ENCODE measurements at regions of chr20 and their contacts with region 1.

Region 1: GRCh38 chr20:58447511-58448391 is 58.7 kb downstream of the VAPB start:
- DNase-seq: peak; percentile 48 to 62
- ATAC-seq: peak; percentile 93 to 94
- H3K4me3 ChIP-seq: no peak overlapping the region
- H3K27ac ChIP-seq: no peak overlapping the region
- H3K4me1 ChIP-seq: no peaks in the 10 kb centered on the region
- CTCF ChIP-seq: peak; percentile 74
- EP300 ChIP-seq: no peak
- POLR2A ChIP-seq: no peak
- RAD21 ChIP-seq: peak; percentile 83 to 88

Region 2: DNA sequence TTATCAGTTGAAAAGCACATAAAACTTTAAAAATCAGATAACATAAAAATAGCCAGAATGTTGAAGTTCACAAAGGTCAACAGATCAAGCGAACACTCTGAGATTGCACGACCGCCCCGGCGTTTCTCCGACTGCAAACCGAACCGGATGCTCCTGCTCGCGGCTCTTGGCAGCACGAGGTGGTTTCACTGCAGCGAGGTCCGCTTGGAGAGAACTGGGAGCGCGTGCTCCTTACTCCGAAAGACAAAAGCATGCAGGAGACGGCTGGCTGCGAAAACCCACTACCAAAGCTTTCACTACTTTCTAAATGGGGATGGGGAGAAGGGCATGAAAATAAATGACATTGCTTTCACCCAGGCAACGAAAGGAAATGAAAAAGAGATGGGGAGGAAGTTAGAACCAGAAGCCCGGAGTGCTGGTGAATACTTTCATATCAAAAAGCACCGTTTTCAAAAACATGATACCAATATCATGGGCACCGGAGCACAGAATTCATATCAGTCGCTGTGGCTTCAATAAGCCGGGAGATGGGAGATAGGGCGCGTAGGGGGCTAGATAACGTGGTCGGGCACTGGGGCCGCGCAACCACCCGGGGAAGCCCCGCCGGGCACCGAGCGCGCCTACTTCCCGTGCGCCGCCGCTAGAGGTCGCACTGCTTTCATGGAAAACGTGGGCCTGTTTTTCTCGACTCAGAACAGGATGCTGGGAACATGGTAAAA is 211.0 kb before region 1 on chr20:
- CTCF ChIA-PET with region 1: interaction called, 42 read pairs
- POLR2A ChIA-PET with region 1: no interaction called
- DNase-seq: peak; percentile 67 to 84
- ATAC-seq: peak; percentile 94 to 95
- H3K4me3 ChIP-seq: peak overlapping the region; percentile 53
- H3K27ac ChIP-seq: peak overlapping the region; percentile 52 to 74; a peak in 5 of 6 replicates
- H3K4me1 ChIP-seq: peaks cover 4% of the 10 kb centered on the region; the same call in 1 of the 3 replicates
- CTCF ChIP-seq: peak; percentile 93
- EP300 ChIP-seq: no peak
- POLR2A ChIP-seq: no peak
- RAD21 ChIP-seq: peak; percentile 89 to 93

Region 3: GRCh38 chr20:58306421-58307276 is 141.1 kb before region 1 on chr20:
- CTCF ChIA-PET with region 1: interaction called, 14 read pairs
- POLR2A ChIA-PET with region 1: no interaction called
- DNase-seq: peak; percentile 10 to 30
- ATAC-seq: no peak
- H3K4me3 ChIP-seq: no peak overlapping the region
- H3K27ac ChIP-seq: no peak overlapping the region
- H3K4me1 ChIP-seq: peaks cover 16% of the 10 kb centered on the region
- CTCF ChIP-seq: no peak
- EP300 ChIP-seq: no peak
- POLR2A ChIP-seq: no peak
- RAD21 ChIP-seq: no peak

Region 4: DNA sequence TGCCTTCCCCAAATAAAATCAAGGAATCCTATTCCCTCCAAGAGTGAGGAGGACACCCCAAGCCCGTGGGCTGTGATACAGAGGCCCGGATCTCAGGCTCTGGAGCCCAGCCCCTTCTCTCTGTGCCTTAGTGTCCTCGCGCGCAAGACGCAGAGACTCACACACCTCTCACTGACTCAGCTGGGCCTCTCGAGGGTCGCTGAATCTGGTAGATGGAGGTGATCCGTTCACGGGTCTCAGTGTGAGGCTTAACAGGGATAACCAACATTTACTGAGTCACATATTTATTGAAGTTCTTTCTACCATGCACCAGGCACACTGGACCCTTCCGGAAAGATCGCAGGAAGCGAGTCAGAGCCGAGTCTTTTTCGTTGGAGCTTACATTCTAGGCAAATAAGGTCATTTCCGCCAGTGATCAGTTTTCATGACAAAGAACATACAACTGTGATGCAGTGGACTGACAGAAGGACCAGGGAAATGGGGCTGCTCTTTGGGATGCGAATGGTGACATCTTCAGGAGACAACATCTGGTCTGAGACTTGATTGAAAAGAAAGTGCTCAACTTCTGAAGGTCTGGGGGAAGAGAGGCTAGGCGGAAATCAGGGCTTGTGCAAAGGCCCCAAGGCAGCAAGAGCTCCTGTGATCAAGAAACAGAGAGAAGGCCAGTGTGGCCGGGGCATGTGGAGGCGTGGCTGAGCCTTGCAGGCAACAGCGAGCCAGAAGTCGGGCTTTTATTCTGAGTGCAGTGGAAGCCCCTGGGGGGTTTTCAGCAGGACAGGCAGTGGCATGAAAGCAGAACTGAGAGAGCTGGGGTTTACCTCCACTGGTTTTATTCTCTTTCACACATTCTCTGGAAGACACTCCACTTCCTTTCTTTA is 10.7 kb after region 1 on chr20:
- CTCF ChIA-PET with region 1: interaction called, 33 read pairs
- POLR2A ChIA-PET with region 1: no interaction called
- DNase-seq: no peak
- ATAC-seq: no peak
- H3K4me3 ChIP-seq: no peak overlapping the region
- H3K27ac ChIP-seq: no peak overlapping the region
- H3K4me1 ChIP-seq: no peaks in the 10 kb centered on the region
- CTCF ChIP-seq: no peak
- EP300 ChIP-seq: no peak
- POLR2A ChIP-seq: no peak
- RAD21 ChIP-seq: no peak

Region 5: GRCh38 chr20:58839474-58839874 is 391.7 kb after region 1 on chr20:
- CTCF ChIA-PET with region 1: interaction called, 12 read pairs
- POLR2A ChIA-PET with region 1: no interaction called
- DNase-seq: peak; percentile 57 to 70
- ATAC-seq: peak; percentile 87 to 92
- H3K4me3 ChIP-seq: peak overlapping the region; percentile 46
- H3K27ac ChIP-seq: no peak overlapping the region
- H3K4me1 ChIP-seq: peaks cover 8% of the 10 kb centered on the region
- CTCF ChIP-seq: peak; percentile 60
- EP300 ChIP-seq: no peak
- POLR2A ChIP-seq: no peak
- RAD21 ChIP-seq: peak; percentile 71 to 81

Measured in A549 (cell line).